ENCODE measurements at regions of chr1 and their contacts with region 1.

Region 1: GRCh38 chr1:183628537-183628936 is 7.0 kb downstream of the ARPC5 start:
- DNase-seq: no peak
- H3K4me3 ChIP-seq: no peak overlapping the region
- H3K27ac ChIP-seq: no peak overlapping the region
- H3K27me3 ChIP-seq: no peaks in the 10 kb centered on the region
- CTCF ChIP-seq: no peak

Region 2: DNA sequence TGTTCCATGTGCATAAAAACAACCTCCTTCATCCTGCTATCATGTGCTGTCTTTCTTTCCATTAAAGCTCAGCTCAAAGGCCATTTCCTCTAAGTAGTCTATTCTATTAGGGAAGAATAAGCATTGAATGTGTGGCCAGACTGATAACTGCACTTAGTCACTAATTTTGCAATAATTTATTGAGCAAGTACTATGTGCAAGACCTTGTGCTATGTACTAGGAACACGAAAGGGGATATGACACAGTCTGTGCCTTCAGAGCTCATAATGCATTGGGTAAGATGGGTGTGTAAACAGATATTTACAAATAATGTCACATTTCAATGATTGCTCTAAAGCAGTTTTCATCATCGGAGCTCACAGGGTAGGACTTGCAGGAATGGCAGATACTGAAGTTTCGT is 264.6 kb before region 1 on chr1:
- CTCF ChIA-PET with region 1: no interaction called
- POLR2A ChIA-PET with region 1: interaction called, 11 read pairs
- DNase-seq: no peak
- H3K4me3 ChIP-seq: no peak overlapping the region
- H3K27ac ChIP-seq: no peak overlapping the region
- H3K27me3 ChIP-seq: peaks cover 33% of the 10 kb centered on the region
- CTCF ChIP-seq: no peak

Region 3: DNA sequence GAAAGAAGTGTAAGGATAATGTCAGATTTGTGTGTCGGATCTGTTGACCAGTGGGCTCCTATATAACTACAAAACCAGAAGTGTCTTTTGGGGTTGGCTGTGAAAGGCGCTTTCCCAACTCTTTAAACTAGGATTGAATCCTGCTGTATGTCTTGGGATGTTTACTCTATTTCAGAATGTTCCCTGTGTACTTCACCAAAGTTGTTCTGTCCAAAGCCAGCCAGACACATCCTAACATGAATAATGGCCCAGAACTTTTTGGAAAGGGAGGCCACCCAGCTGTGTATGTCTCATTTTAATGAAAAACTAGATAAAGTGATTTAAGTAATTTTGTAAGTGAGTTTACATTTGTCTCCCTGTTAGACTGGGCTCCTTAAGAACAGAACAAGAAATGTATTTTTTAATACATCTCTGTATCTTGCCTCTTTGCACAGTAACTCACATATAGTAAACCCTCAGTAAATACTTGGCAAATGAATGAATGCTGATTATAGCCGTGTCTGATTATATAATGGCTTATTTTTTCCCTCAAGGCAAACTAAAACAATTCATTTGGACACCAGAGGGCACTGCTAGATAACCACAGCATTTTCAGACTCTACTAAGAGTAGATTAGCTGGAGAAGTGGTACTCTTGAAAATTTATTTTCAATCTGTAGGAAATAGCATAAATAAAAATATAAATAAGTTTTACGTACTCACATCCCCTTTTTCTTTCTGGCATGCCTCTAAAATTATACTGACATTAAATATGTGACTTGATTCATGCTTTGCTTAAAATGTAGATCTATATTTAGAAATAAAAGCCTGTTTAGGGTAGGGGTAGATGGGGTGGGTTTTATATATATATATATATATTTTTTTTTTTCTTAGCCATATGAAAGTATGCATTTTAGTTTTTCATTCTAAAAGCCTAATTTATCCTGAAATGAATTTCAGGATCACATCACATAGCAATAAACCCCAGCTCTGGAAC is 446.8 kb after region 1 on chr1:
- CTCF ChIA-PET with region 1: no interaction called
- POLR2A ChIA-PET with region 1: no interaction called
- DNase-seq: no peak
- H3K4me3 ChIP-seq: no peak overlapping the region
- H3K27ac ChIP-seq: no peak overlapping the region
- H3K27me3 ChIP-seq: no peaks in the 10 kb centered on the region
- CTCF ChIP-seq: peak; percentile 80